Heart right ventricle (tissue), 16 donors: ENCODE measurements at regions of chr1 and their contacts with region 1.

Region 1: GRCh38 chr1:61049850-61050540 is 32.4 kb upstream of the NFIA start:
- DNase-seq: peak; percentile 94 to 95
- ATAC-seq: peak; percentile 82 to 92 (median 86)
- H3K4me3 ChIP-seq: peak overlapping the region; percentile 64 to 91 (median 78)
- H3K27ac ChIP-seq: peak overlapping the region; percentile 92 to 100 (median 98)
- H3K4me1 ChIP-seq: peaks cover 5 to 50% (median 38%) of the 10 kb centered on the region in 9 donors
- H3K27me3 ChIP-seq: peaks cover 0 to 40% (median 0%) of the 10 kb centered on the region in 7 donors
- CTCF ChIP-seq: peak; percentile 94 to 99 (median 98)

Region 2: GRCh38 chr1:59971464-59971911 is 1078.5 kb before region 1 on chr1:
- intact Hi-C with region 1: loop called in 5 of 10 experiments (anchors 10 kb)
- DNase-seq: peak; percentile 63 to 68
- ATAC-seq: peak; percentile 78 to 93 (median 86)
- H3K4me3 ChIP-seq: no peak overlapping the region
- H3K27ac ChIP-seq: no peak overlapping the region
- H3K4me1 ChIP-seq: peaks cover 0 to 7% (median under 1%) of the 10 kb centered on the region in 9 donors
- H3K27me3 ChIP-seq: peaks cover 0 to 6% (median 0%) of the 10 kb centered on the region in 7 donors
- CTCF ChIP-seq: peak; percentile 82 to 93 (median 90)

Region 3: GRCh38 chr1:60857851-60858250 is 192.1 kb before region 1 on chr1:
- intact Hi-C with region 1: loop called in 1 of 10 experiments (anchors 10 kb)
- DNase-seq: no peak
- ATAC-seq: no peak
- H3K4me3 ChIP-seq: no peak overlapping the region
- H3K27ac ChIP-seq: no peak overlapping the region
- H3K4me1 ChIP-seq: peaks cover 0 to 9% (median 0%) of the 10 kb centered on the region in 9 donors
- H3K27me3 ChIP-seq: no peaks in the 10 kb centered on the region
- CTCF ChIP-seq: no peak

Region 4: GRCh38 chr1:61120998-61121397 is 71.0 kb after region 1 on chr1:
- intact Hi-C with region 1: loop called in 1 of 10 experiments (anchors 5 kb)
- DNase-seq: no peak
- ATAC-seq: peak in 7 of 8 donors; percentile 40 to 83 (median 63)
- H3K4me3 ChIP-seq: peak overlapping the region in 8 of 10 donors; percentile 2 to 39 (median 29)
- H3K27ac ChIP-seq: peak overlapping the region; percentile 36 to 85 (median 65)
- H3K4me1 ChIP-seq: peaks cover 10 to 97% (median 77%) of the 10 kb centered on the region in 9 donors
- H3K27me3 ChIP-seq: no peaks in the 10 kb centered on the region
- CTCF ChIP-seq: no peak

Region 5: DNA sequence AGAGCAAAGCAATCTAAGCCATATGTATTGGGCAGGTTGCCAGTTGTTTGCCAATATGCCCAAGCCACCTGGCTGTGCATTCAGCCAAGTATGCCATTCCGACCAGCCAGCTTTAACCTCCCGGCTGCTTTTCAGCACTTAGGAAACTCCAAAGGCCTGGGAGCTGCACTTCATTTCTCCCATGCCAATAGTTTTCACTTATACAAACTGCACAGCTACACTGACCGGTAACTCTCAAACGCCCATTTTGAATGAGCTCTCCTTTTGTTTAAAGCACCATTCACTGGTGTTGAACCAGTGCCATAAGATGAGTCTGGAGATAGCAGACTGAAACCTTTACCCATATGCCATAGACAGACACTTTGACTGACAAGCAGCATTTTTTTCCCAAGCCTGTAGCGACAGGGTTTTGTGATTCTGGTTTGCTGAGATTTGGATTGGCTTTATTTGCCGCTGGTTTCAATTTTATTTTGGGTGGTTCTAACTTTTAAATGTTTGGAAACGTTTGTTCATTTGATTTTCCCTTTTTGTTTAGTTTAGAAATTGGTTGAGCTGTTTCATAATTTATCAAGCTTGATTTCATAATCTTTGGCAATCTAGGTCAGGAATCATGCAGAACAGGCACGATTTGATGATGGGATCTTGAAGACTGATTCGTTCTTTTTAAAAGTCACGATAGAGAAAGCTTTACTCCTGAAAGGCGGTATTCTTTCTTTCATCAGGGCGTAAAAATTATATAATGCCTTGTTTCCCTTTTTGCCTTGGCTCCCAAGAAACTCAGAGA is 177.0 kb after region 1 on chr1:
- intact Hi-C with region 1: loop called in 1 of 10 experiments (anchors 10 kb)
- DNase-seq: no peak
- ATAC-seq: peak in 5 of 8 donors; percentile 8 to 49 (median 35)
- H3K4me3 ChIP-seq: no peak overlapping the region
- H3K27ac ChIP-seq: peak overlapping the region in 4 of 10 donors; percentile 15 to 43 (median 22)
- H3K4me1 ChIP-seq: peaks cover 0 to 49% (median 28%) of the 10 kb centered on the region in 9 donors
- H3K27me3 ChIP-seq: no peaks in the 10 kb centered on the region
- CTCF ChIP-seq: no peak

Region 6: DNA sequence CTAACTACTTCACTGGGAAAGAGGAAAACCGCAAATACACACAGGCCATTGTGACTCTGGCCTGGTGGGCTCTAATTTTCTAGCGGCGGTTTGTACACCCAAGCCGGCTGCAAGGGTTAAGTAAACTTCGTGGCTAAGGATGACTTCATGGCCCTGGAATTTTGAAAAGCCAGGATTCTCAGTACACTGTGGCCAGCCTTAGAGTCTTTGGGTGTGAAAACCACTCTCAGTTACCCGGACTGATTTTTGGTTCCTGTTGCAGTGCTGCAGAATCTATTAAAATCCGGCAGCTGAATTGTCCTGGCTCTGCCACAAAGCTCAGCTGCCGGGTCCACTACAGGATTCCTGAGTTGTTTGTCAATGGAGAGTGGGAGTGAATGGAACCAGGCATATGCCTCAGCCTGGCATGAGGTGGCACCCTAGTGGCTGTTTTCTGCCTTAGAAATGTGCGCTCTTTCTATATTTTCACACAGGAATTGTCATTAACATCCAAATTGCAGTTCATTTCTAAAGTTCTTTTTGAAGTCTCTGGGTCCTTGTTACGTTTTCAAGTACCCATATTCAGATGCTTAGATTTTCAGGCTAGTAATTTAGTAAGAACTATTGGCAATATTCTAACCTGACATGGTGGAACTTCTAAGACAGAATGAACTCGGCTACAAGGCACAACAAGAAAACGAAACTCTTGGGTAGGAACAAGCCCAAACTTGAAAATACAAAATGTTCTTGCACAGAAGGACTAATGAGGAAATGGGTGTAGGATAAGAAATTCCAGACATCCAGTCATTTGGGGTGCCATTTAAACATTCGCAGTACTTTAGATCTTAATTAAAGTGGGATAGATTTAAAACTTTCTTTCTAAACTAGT is 288.2 kb after region 1 on chr1:
- intact Hi-C with region 1: loop called in 9 of 10 experiments (anchors 2 to 10 kb)
- DNase-seq: peak; percentile 48 to 74
- ATAC-seq: peak; percentile 69 to 90 (median 87)
- H3K4me3 ChIP-seq: peak overlapping the region in 6 of 10 donors; percentile 11 to 28 (median 19)
- H3K27ac ChIP-seq: peak overlapping the region; percentile 44 to 86 (median 75)
- H3K4me1 ChIP-seq: peaks cover 8 to 64% (median 44%) of the 10 kb centered on the region in 9 donors
- H3K27me3 ChIP-seq: no peaks in the 10 kb centered on the region
- CTCF ChIP-seq: peak; percentile 19 to 80 (median 63)

Region 7: GRCh38 chr1:61588736-61589672 is 539.0 kb after region 1 on chr1:
- intact Hi-C with region 1: loop called in 4 of 10 experiments (anchors 2 to 10 kb)
- DNase-seq: peak; percentile 36 to 52
- ATAC-seq: peak; percentile 57 to 83 (median 74)
- H3K4me3 ChIP-seq: no peak overlapping the region
- H3K27ac ChIP-seq: no peak overlapping the region
- H3K4me1 ChIP-seq: no peaks in the 10 kb centered on the region
- H3K27me3 ChIP-seq: no peaks in the 10 kb centered on the region
- CTCF ChIP-seq: peak; percentile 40 to 75 (median 69)